Endothelial cell of umbilical vein (primary cell): ENCODE measurements at regions of chr4 and their contacts with region 1.

Region 1: DNA sequence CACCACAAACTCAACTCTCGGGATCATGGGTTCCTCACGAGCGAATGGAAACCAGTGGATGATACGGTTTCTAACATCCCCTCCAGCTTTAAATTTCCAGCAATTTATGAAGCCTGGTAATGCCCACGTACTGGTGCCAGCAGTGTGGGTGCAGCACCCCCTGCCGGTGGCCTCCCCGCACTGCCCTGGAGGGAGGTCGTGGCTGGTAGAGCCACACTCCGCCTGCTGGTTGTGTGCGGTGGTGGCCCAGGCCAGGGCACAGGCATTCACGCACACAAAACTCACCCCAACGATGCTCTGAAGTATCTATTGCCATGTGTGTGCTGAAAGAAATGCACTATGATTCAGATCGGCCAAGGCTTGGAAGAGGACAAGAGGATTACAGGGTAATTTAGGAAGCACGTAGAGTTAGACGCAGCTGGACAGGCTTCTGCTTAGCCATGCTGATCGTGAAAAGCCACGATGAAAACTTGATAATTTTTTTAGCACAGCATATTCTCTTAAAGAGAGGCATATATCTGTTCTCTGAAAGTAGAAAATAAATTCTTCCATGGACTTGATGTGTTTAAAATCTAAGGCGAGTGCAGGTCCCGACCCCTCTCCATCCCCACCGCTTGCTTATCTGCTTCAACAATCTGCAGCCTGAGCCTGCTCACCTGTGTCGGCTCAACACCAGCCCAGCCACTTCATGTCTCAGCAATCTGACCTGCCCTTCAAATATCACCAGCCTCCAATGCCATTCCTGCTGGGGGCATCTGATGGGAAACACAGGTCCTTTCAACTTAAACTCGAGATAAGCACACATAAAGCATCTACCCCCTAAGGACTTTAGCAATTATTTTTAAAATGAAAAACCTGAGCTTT is 59.0 kb downstream of the SCD5 start:
- DNase-seq: peak; percentile 82
- H3K4me3 ChIP-seq: no peak overlapping the region
- H3K27ac ChIP-seq: no peak overlapping the region
- H3K4me1 ChIP-seq: no peaks in the 10 kb centered on the region
- H3K27me3 ChIP-seq: no peaks in the 10 kb centered on the region
- CTCF ChIP-seq: peak; percentile 99 to 100
- POLR2A ChIP-seq: no peak

Region 2: DNA sequence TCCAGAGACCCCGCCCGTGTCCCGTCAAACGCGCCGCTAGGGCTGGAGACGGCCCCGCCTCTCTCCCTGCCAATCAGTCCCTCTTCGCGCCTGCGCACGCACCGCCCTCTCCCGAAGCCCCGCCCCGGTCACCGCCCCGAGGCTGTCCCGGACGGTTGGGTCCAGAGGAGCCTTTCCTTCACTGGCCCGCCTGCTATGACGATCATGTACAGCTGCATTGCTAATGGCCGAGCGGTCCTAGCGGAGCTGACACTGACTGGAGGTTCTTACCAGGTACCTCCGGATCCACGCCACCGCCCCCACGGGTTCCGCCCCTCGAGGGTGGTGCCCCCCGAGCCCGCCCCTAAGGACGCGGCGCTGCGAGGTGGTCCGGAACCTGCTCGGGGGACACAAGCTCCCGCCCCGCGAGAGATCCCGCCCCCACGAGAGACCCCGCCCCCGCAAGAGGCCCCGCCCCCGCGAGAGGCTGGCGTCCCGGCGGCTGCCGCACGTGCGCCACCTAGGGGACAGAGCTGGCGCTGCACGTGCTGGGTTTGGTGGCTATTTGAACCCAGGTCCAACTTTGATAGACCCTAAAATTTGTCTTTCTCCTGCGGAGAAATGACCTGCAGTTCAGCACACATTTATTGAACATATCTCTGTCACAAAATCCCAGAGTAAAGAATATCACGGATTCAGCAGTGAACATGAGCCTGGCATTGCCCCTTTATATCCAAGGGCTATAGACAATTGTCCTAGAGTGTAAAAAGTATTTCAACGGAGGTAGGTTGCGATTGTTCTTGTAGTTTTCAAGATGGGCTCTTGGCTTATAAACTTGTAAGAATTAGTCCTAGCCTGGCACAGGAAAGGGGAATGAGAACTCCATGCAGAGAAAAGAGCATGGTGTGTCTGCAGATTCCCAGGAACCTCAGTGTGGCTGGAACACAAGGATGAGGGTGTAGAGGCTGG is 454.4 kb before region 1 on chr4:
- CTCF ChIA-PET with region 1: no interaction called
- POLR2A ChIA-PET with region 1: no interaction called
- dilution Hi-C with region 1: no loop called
- intact Hi-C with region 1: no loop called
- DNase-seq: peak; percentile 99
- H3K4me3 ChIP-seq: peak overlapping the region in 2 of 3 experiments; percentile 40 to 44
- H3K27ac ChIP-seq: no peak overlapping the region
- H3K4me1 ChIP-seq: peaks cover 6% of the 10 kb centered on the region
- H3K27me3 ChIP-seq: peaks cover 13 to 16% of the 10 kb centered on the region in 2 experiments
- CTCF ChIP-seq: peak; percentile 69 to 90
- POLR2A ChIP-seq: no peak

Region 3: GRCh38 chr4:82450966-82451755 is 288.4 kb before region 1 on chr4:
- CTCF ChIA-PET with region 1: interaction called, 11 read pairs
- POLR2A ChIA-PET with region 1: no interaction called
- dilution Hi-C with region 1: no loop called
- intact Hi-C with region 1: no loop called
- DNase-seq: no peak
- H3K4me3 ChIP-seq: no peak overlapping the region
- H3K27ac ChIP-seq: no peak overlapping the region
- H3K4me1 ChIP-seq: no peaks in the 10 kb centered on the region
- H3K27me3 ChIP-seq: no peaks in the 10 kb centered on the region
- CTCF ChIP-seq: no peak
- POLR2A ChIP-seq: no peak

Region 4: DNA sequence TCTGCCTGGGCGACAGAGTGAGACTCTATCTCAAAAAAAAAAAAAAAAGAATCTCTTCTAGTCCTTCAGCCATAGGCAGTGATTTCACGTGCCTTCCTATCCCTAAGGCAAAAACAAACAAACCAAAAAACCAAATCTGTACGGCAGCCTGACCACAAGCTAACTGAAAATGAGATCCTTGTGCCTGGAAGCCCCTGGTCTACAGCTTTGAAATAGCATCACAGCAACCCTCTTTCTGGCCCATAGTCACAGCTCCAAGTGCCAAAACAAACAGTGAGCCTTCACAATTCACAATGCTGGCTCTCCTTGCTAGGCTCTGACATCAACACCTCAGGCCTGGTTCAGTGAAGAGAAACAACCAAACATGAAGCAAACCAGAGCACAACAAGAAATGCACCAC is 223.8 kb before region 1 on chr4:
- CTCF ChIA-PET with region 1: interaction called, 31 read pairs
- POLR2A ChIA-PET with region 1: no interaction called
- dilution Hi-C with region 1: no loop called
- intact Hi-C with region 1: no loop called
- DNase-seq: peak; percentile 94
- H3K4me3 ChIP-seq: no peak overlapping the region
- H3K27ac ChIP-seq: peak overlapping the region; percentile 80
- H3K4me1 ChIP-seq: peaks cover 40% of the 10 kb centered on the region
- H3K27me3 ChIP-seq: no peaks in the 10 kb centered on the region
- CTCF ChIP-seq: no peak
- POLR2A ChIP-seq: no peak

Region 5: DNA sequence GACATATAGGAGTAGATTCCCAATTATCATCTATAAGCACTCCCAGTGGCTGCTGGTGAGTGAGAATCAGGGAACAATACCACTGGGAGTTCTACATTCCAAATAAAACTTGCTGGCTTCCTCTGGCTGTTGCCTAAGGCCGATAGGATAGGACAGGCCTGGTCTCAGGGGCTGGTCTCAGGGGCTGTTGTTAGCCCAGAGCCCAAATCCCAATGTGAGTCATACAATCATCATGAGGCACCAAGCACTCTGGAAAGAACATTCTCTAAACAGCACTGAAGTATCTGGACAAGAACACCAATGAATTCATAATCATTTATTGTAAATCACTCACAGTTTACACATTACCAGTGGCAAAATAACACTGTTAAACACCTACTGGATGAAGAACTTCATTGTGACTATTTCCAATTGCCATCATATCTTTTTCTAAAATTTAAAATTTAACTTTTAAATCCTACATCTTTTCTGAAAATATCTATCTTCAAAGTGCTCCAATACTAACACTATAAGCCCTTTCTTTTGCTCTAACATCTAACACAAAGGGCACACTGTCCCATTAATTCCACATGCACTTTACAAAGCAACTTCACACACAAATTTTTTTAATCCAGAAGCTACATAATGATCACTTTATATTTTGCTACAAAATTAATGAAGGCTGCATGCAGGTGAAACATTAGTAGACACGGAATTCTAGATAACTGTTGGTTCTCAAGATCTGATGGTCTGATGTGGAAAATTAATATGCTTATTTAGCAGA is 110.1 kb before region 1 on chr4:
- CTCF ChIA-PET with region 1: interaction called, 16 read pairs
- POLR2A ChIA-PET with region 1: no interaction called
- dilution Hi-C with region 1: no loop called
- intact Hi-C with region 1: no loop called
- DNase-seq: no peak
- H3K4me3 ChIP-seq: no peak overlapping the region
- H3K27ac ChIP-seq: no peak overlapping the region
- H3K4me1 ChIP-seq: no peaks in the 10 kb centered on the region
- H3K27me3 ChIP-seq: no peaks in the 10 kb centered on the region
- CTCF ChIP-seq: no peak
- POLR2A ChIP-seq: no peak

Region 6: GRCh38 chr4:82704156-82704555 is 35.4 kb before region 1 on chr4:
- CTCF ChIA-PET with region 1: interaction called, 18 read pairs
- POLR2A ChIA-PET with region 1: no interaction called
- dilution Hi-C with region 1: no loop called
- intact Hi-C with region 1: no loop called
- DNase-seq: no peak
- H3K4me3 ChIP-seq: no peak overlapping the region
- H3K27ac ChIP-seq: no peak overlapping the region
- H3K4me1 ChIP-seq: peaks cover 11% of the 10 kb centered on the region
- H3K27me3 ChIP-seq: no peaks in the 10 kb centered on the region
- CTCF ChIP-seq: no peak
- POLR2A ChIP-seq: no peak

Region 7: DNA sequence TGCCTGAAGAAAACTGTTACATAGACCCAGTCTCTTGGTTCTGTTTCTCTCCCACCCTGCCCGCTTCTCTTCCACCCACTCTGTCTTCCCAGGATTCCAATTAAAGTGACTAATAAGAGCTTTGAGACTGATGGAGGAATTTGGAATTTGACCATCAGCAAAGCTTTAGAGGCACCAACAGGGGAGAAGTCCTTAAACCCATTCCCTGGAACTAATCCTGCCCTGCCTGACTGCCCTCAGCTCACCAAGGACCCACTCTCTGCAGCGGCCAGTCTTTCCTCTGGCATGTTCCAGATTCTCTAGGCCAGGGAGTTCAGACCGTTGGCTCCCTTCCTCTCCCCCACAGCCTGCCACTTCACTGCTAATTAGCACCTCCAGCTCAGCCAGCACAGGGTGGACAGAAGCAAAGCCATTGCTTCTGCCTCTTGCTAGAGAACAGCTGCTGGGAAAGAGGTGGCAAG is 35.2 kb after region 1 on chr4:
- CTCF ChIA-PET with region 1: interaction called, 10 read pairs
- POLR2A ChIA-PET with region 1: no interaction called
- dilution Hi-C with region 1: no loop called
- intact Hi-C with region 1: no loop called
- DNase-seq: no peak
- H3K4me3 ChIP-seq: no peak overlapping the region
- H3K27ac ChIP-seq: no peak overlapping the region
- H3K4me1 ChIP-seq: no peaks in the 10 kb centered on the region
- H3K27me3 ChIP-seq: no peaks in the 10 kb centered on the region
- CTCF ChIP-seq: no peak
- POLR2A ChIP-seq: no peak

Region 8: DNA sequence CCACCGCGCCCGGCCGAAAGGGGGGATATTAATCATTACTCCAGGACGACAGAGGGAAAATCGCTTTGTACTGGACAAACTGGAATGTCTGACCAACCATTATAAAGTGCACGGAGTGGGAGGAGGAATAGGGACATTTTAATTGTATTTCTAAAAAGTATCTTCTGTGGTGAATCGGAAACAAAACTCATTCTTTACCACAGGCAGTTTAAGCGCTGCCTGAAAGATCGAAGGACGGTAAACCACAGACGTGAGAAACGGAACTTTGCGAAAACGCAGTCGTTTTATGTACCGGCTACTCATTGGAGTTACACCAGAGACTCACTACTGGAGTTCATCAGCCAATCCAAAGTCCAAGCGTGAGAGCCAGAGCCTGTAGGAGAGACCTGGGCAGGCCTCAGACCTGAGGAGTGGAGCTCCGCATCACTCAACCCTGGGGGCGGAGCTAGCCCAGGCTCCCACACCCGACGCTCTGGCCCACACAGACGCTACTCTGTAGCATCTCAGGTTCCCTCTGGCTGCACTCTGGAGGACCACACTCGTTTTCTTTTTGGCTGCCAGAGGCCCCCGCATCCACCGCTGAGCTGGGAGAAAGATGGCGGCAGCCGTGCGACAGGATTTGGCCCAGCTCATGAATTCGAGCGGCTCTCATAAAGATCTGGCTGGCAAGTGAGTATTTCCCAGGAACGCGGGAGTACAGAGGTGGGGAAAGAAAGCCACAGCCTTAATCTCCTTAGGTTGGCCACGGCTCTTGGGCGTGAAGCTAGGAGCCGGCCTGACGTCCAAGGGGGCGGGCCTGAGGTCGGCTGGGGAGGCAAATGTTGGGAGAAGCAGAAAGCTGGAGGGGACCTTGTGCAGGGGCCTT is 295.3 kb after region 1 on chr4 and contains the start of gene COPS4:
- CTCF ChIA-PET with region 1: no interaction called
- POLR2A ChIA-PET with region 1: no interaction called
- dilution Hi-C with region 1: no loop called
- intact Hi-C with region 1: no loop called
- DNase-seq: peak; percentile 100
- H3K4me3 ChIP-seq: peak within 1 kb of the TSS; percentile 78 to 94 (median 91)
- H3K27ac ChIP-seq: peak within 1 kb of the TSS; percentile 88
- H3K4me1 ChIP-seq: peaks cover 28% of the 10 kb centered on the region
- H3K27me3 ChIP-seq: peaks cover 0 to 3% of the 10 kb centered on the region in 2 experiments
- CTCF ChIP-seq: peak in 1 of 2 donors; percentile 40
- POLR2A ChIP-seq: peak; percentile 88
- total RNA-seq, gene COPS4: 47.3 and 53.0 TPM in 2 replicates